ENCODE measurements at regions of chr9 and their contacts with region 1.

Region 1: DNA sequence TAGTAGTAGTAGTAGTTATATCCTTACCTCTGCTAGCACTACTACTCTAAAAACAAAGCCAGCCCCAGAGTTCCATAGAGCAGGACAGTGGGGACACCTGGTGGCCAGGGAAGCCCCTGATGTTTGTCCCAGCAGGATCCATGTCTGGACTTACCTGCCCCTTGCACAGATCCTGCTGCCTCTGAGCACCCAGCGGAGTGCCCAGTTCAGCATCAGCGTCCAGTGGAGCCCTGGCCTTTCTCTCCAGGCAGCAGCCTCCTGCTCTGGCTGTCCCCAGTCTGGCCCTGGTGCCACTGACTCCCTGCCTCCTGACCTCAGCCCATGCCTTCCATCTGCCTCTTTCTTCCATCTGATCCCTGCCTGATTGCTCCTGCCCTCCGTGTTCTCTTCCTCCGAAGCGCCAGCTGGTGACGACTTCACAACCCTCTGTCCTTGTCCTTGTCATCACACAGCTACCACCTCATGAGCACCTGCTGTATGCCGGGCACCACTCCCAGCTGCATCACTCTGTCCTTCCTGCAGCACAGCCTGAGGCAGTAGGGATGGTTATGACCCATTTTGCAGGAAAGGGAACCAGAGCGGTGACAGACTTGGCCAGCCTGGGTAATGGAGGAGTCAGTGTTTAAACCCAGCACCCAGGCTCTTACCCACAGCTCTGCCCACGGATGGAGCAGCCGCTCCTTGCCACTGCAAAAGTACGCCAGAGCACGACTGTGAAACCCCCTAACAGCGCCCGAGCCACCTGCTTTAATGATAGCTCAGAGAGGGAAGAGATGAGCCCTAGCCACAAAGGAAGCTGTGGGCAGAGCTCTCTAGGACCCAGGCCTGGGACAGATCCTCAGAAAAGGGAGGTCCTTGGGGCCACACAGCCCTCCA is 11.5 kb downstream of the SARDH start:
- DNase-seq: peak; percentile 70
- ATAC-seq: peak; percentile 72
- H3K4me3 Mint-ChIP-seq: no peak overlapping the region
- H3K27ac Mint-ChIP-seq: no peak overlapping the region
- H3K4me1 Mint-ChIP-seq: peaks cover 9% of the 10 kb centered on the region
- H3K27me3 Mint-ChIP-seq: peaks cover 11% of the 10 kb centered on the region

Region 2: GRCh38 chr9:133415170-133415569 is 311.5 kb before region 1 on chr9:
- CTCF ChIA-PET with region 1: no interaction called
- POLR2A ChIA-PET with region 1: no interaction called
- DNase-seq: no peak
- ATAC-seq: no peak
- H3K4me3 Mint-ChIP-seq: peak overlapping the region; percentile 22
- H3K27ac Mint-ChIP-seq: peak overlapping the region; percentile 47
- H3K4me1 Mint-ChIP-seq: peaks cover 51% of the 10 kb centered on the region
- H3K27me3 Mint-ChIP-seq: no peaks in the 10 kb centered on the region

Region 3: DNA sequence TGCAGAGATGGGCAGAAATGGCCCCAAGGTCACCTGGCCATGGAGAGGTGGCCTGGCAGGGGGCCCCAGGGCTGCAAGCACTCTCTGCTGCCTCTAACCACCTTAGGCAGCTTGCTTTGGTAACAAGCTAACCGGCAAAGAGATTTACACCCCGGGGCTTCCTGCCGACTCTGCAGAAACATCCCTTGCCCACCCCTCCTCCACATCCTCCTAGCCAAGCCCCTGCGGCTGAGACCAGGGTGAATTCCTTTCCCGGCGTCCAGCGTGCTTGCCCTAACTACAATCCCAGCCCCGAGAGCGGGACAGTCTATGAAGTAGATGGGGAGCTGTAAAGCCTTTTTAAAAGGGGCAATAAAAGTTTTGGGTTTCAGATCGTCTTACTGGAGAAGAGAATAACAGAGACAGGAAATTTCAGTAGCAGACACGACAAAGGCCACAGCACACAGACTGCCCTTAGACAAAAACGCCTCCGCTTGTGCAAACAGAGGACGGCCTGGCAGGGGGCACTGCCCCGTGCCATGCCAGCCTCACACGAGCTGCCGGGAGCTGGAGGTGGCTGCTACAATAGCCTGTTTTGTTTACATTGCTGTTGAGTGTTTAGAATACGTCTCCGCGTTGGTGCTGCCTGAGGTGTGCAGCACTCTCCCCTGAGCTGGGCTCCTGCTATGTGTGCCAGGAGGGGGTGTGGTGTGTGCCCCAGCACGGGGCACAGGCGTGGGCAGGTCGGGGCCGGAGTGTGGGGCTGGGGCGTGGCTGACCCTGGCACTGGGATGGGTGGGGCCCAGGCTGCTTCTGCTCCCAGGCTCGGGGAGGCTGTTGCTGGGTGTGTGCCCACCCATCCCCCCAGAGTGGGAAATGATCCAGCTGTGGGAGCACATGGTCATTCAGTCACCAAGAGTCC is 217.2 kb before region 1 on chr9:
- CTCF ChIA-PET with region 1: no interaction called
- POLR2A ChIA-PET with region 1: no interaction called
- DNase-seq: peak; percentile 64
- ATAC-seq: peak; percentile 74
- H3K4me3 Mint-ChIP-seq: peak overlapping the region; percentile 65
- H3K27ac Mint-ChIP-seq: peak overlapping the region; percentile 89
- H3K4me1 Mint-ChIP-seq: peaks cover 17% of the 10 kb centered on the region
- H3K27me3 Mint-ChIP-seq: no peaks in the 10 kb centered on the region

Region 4: GRCh38 chr9:133532937-133533668 is 193.5 kb before region 1 on chr9:
- CTCF ChIA-PET with region 1: interaction called, 10 read pairs
- POLR2A ChIA-PET with region 1: no interaction called
- DNase-seq: peak; percentile 76
- ATAC-seq: peak; percentile 48
- H3K4me3 Mint-ChIP-seq: no peak overlapping the region
- H3K27ac Mint-ChIP-seq: peak overlapping the region; percentile 24
- H3K4me1 Mint-ChIP-seq: peaks cover 6% of the 10 kb centered on the region
- H3K27me3 Mint-ChIP-seq: peaks cover 19% of the 10 kb centered on the region

Region 5: DNA sequence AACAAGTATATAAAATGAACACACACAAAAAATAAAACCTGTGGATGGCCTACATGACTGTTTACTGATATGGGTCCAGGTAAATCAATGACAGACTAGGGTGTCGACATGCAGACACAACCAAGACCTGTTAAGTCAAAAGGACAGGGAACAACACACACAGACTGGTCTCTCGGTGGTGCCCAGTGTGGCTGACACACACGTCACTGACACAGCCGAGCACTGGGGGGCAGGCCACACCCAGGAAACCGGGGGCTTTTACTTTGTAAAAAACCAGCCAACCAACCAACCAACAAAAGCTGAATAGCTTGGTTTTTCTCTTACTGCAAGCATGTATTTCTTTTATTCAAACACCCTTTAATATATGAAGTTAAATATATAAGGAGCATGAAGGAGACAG is 122.4 kb before region 1 on chr9:
- CTCF ChIA-PET with region 1: interaction called, 19 read pairs
- POLR2A ChIA-PET with region 1: no interaction called
- DNase-seq: peak; percentile 66
- ATAC-seq: peak; percentile 79
- H3K4me3 Mint-ChIP-seq: no peak overlapping the region
- H3K27ac Mint-ChIP-seq: no peak overlapping the region
- H3K4me1 Mint-ChIP-seq: peaks cover 10% of the 10 kb centered on the region
- H3K27me3 Mint-ChIP-seq: peaks cover 12% of the 10 kb centered on the region

Region 6: DNA sequence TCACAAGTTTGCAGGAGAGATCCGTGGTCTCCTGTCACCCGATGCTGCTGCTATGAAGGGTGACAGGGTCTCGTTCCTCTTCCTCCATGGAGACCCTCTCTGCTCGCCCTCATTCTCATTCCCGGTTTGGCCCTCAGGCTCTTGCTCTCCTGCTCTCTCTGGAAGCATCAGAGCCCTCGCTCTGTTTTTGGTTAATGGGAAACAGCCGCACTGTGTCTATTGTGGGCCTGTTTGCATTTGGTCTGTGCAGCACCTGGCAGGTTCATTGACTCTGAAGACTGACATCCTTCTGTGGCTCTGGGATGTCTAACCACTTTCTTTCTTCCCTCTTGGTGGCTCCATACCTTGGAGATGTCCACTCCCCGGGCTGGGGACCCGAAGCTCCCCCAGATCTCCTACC is 104.8 kb before region 1 on chr9:
- CTCF ChIA-PET with region 1: no interaction called
- POLR2A ChIA-PET with region 1: no interaction called
- DNase-seq: no peak
- ATAC-seq: no peak
- H3K4me3 Mint-ChIP-seq: no peak overlapping the region
- H3K27ac Mint-ChIP-seq: peak overlapping the region; percentile 67
- H3K4me1 Mint-ChIP-seq: peaks cover 35% of the 10 kb centered on the region
- H3K27me3 Mint-ChIP-seq: peaks cover 14% of the 10 kb centered on the region

Region 7: DNA sequence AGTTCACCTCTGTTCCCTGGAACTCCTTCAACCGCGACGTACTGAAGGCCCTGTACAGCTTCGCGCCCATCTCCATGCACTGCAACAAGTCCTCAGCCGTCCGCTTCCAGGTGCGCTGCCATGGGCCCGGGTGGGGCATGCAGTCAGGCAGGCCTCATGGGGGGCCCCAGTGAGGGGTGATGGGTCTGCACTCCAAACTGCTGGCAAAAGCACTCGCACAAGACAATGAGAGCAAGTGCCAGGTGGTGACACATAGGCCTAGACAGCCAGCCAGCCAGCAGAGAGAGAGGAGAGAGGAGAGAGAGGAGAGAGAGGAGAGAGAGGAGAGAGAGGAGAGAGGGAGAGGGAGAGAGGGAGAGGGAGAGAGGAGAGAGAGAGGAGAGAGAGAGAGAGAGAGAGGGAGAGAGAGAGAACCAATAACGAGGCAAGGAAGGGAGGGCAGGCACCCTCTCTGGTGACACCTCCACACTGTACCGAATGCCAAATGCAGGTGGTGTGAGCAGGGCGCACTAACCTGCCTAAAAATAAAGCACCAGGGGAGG is 69.4 kb before region 1 on chr9:
- CTCF ChIA-PET with region 1: interaction called, 10 read pairs
- POLR2A ChIA-PET with region 1: no interaction called
- DNase-seq: no peak
- ATAC-seq: peak; percentile 4
- H3K4me3 Mint-ChIP-seq: no peak overlapping the region
- H3K27ac Mint-ChIP-seq: no peak overlapping the region
- H3K4me1 Mint-ChIP-seq: peaks cover 13% of the 10 kb centered on the region
- H3K27me3 Mint-ChIP-seq: peaks cover 50% of the 10 kb centered on the region

Region 8: GRCh38 chr9:133742849-133743444 is 16.3 kb after region 1 on chr9:
- CTCF ChIA-PET with region 1: interaction called, 18 read pairs
- POLR2A ChIA-PET with region 1: interaction called, 3 read pairs
- DNase-seq: peak; percentile 84
- ATAC-seq: peak; percentile 82
- H3K4me3 Mint-ChIP-seq: no peak overlapping the region
- H3K27ac Mint-ChIP-seq: no peak overlapping the region
- H3K4me1 Mint-ChIP-seq: peaks cover 11% of the 10 kb centered on the region
- H3K27me3 Mint-ChIP-seq: peaks cover 11% of the 10 kb centered on the region

Region 9: DNA sequence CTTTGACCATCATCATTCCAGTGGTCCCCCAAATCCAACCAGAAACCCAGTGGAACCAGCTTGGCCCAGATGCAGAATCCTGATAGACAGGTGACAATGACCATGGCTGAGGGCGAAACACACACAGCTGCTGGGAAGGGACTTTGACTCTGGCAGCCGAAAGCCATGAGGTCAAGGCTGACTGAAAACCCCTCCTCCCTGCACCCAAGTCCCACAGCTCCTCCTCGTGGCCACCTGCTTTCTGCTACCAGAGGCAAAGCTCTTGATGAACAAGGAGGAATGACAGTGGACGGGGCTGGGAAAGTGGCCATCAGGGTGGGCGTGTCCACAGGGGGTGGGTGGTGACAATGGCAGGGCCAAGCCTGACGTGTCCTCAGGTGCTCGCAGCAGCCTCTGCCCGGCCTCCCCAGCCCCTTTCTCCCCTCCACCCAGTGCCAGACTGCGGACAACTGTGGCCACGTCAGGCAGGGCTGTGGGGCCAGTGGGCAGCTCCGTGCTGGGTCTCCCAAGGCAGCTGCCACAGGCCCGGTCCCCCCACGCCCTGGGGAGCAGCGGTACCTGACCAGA is 42.3 kb after region 1 on chr9:
- CTCF ChIA-PET with region 1: no interaction called
- POLR2A ChIA-PET with region 1: no interaction called
- DNase-seq: no peak
- ATAC-seq: no peak
- H3K4me3 Mint-ChIP-seq: no peak overlapping the region
- H3K27ac Mint-ChIP-seq: no peak overlapping the region
- H3K4me1 Mint-ChIP-seq: no peaks in the 10 kb centered on the region
- H3K27me3 Mint-ChIP-seq: no peaks in the 10 kb centered on the region

Measured in activated CD8-positive, alpha-beta T cell treated with anti-CD3 and anti-CD28 coated beads, Interleukin-2, amount 10 ng/mL, durations not matched to agents 7 days and 5 days (primary cell).